ENCODE measurements at regions of chr17 and their contacts with region 1.

Region 1: GRCh38 chr17:12813664-12814063 is 24.4 kb downstream of the ARHGAP44 start:
- DNase-seq: no peak
- H3K4me3 ChIP-seq: no peak overlapping the region
- H3K27ac ChIP-seq: no peak overlapping the region
- H3K4me1 ChIP-seq: no peaks in the 10 kb centered on the region
- H3K27me3 ChIP-seq: no peaks in the 10 kb centered on the region
- CTCF ChIP-seq: no peak
- POLR2A ChIP-seq: no peak

Region 2: GRCh38 chr17:12765548-12765947 is 48.1 kb before region 1 on chr17:
- CTCF ChIA-PET with region 1: no interaction called
- POLR2A ChIA-PET with region 1: no interaction called
- dilution Hi-C with region 1: no loop called
- intact Hi-C with region 1: loop called (anchors 1 kb)
- DNase-seq: no peak
- H3K4me3 ChIP-seq: no peak overlapping the region
- H3K27ac ChIP-seq: no peak overlapping the region
- H3K4me1 ChIP-seq: no peaks in the 10 kb centered on the region
- H3K27me3 ChIP-seq: no peaks in the 10 kb centered on the region
- CTCF ChIP-seq: no peak
- POLR2A ChIP-seq: no peak